Head of caudate nucleus (tissue), 42 donors: ENCODE measurements at regions of chr14 and their contacts with region 1.

Region 1: DNA sequence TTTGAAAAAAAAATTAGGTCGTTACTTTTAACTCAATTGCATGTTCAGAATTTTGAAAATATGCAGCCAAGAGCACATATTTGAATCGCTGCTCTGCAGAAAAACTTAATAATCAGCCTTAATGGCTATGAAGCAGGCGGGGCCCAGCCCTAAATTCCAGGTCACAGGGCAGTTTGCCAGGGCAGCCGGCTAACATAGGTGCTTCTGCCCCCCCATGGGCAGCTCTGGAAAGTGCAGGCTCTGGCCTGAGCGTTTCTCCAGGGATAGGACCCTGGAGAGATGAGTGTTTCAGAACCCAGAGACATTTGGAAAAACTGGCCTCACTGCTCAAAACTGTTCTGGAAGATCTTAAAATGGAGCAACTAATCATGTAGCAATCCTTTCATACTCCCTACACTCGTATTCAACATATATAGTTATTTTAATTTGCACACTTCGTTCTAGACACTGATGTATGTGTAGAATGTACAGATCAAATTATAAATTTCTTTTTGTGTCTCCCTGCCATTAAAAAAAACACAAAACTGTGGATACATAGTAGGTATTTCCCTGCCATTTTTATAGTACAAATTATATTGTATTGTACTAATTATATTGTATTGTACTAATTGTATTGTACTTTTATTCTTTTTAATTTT is 26.0 kb upstream of the PTGR2 start:
- DNase-seq: peak; percentile 69 to 96 (median 85)

Region 2: DNA sequence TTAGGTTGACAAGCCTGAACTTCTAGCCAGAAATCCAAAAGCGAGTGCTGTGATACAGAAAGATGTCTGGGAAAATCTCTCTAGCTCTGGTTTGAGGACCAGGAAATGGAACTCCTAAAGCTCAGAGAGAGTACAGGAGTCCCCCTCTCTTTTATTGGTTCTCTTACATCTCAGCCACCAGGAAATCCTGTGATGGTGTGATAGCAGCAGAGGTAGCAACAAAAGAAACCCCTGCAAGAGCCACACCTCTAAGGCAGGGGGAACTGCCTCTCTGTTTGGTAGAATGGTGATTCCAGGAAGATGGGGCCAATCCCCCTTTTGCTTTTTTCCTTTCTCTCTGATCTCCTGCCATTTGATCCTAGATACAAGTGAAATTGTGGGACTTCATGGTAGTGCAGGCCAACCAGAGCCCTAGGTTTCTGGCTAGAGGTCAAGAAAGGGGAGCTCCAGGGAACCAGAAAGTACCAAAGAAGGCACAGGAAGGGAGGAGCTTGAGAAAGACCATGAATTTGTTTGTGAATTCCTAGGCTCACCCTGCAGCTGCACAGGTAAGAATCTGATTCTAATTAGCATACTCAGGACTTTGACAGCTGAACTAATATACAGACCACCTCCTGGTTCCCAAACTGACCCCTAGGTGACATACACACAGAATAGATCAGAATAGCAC is 499.9 kb before region 1 on chr14:
- intact Hi-C with region 1: no loop called
- DNase-seq: no peak

Region 3: GRCh38 chr14:73644531-73645247 is 181.0 kb before region 1 on chr14 and contains the start of gene DNAL1:
- intact Hi-C with region 1: no loop called
- DNase-seq: peak; percentile 86 to 97 (median 93)

Region 4: DNA sequence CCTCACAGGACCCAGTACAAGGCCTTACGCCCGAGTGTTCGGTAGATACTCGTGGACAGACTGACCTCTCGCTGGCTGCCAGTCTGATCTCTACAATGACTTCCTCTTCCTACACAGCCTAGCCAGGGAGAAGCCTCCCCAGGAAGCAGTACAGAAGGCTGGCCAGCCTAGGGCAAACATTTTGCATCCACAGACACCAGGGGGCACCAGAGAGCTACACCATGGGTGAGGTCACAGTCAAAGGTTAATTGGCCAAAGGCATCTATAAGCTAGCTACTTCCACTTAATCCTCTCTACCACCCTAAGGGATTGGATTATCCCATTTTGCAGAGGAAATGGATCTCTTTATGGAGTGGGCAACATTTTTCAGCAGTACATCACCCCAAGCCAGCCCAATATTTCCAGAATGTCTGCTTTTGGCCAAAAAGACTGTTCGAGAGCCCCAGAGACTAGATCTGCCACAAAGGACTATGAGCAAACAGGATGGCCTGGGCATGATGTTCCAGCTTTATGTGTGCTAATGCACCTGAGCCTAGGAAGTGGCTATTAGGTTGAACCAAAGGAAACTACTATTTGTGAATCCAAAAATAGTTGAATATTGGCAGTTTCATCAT is 96.8 kb before region 1 on chr14:
- intact Hi-C with region 1: loop called (anchors 1 kb)
- DNase-seq: peak; percentile 62 to 96 (median 86)

Region 5: GRCh38 chr14:73785873-73786695 is 39.6 kb before region 1 on chr14:
- intact Hi-C with region 1: no loop called
- DNase-seq: peak; percentile 40 to 83 (median 66)

Region 6: DNA sequence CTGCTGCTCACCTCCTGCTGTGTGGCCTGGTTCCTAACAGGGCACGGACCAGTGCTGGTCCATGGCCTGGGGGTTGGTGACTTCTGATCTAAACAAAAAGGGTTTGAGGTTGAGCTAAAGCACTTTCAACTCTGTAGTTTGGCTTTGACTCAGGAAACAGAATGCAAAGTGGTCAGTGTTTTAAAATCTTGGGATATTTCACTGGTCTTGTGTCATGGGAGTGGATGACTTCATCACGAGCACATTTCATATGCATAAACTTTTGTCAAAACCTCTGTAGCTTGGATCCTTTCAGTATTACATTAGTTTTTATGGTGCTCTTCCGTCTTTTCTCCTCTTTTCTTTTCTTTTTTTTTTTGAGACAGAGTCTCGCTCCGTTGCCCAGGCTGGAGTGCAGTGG is 98.7 kb after region 1 on chr14:
- intact Hi-C with region 1: no loop called
- DNase-seq: no peak